ENCODE measurements at regions of chr5 and their contacts with region 1.

Region 1: GRCh38 chr5:133423618-133424282 is 188.6 kb downstream of the FSTL4 start:
- DNase-seq: peak; percentile 78
- ATAC-seq: peak; percentile 94

Region 2: GRCh38 chr5:133508845-133509741 is 85.3 kb after region 1 on chr5:
- intact Hi-C with region 1: no loop called
- DNase-seq: no peak
- ATAC-seq: no peak

Region 3: DNA sequence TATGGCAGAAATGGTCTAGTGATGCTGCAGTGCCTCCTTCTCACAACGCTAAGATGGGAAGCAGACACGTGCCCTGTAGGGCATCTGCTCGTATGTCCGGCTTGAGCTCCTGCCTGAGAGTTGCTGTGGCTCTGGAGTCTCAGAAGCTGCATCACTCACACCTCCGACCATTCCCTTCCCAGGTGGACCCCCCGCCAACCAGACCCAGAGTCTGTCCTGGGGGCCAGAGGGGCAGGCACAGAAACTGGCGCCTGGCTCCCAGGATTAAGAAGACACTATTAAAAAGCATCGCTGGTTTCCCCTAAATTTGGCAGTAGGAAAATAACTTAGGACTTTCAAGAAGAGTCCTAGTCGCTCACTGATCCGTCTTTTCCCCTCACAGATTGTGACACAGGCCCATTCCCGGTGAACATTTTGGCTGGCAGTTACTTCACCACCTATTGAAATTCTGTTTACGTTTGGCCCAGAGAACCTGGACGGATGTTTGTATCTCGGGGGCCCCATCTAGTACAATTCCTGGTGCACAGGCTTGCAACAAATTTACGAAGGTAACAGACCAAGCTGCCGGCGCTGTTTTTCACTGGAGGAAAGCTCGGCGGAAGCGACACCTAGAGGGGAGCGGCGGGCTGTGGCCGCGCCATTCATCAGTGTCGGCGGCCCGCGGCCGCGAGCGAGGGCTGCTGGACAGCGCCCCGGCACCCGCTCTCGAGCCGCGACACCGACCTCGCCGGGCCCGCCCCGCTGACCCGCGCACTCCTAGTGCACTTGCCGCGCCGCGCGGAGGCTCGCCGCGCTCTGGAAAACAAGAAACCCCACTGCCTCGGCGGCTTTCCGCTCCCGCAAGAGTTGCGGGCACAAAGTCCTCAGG is 187.0 kb after region 1 on chr5:
- intact Hi-C with region 1: loop called (anchors 10 kb)
- DNase-seq: peak; percentile 72
- ATAC-seq: peak; percentile 97

Region 4: DNA sequence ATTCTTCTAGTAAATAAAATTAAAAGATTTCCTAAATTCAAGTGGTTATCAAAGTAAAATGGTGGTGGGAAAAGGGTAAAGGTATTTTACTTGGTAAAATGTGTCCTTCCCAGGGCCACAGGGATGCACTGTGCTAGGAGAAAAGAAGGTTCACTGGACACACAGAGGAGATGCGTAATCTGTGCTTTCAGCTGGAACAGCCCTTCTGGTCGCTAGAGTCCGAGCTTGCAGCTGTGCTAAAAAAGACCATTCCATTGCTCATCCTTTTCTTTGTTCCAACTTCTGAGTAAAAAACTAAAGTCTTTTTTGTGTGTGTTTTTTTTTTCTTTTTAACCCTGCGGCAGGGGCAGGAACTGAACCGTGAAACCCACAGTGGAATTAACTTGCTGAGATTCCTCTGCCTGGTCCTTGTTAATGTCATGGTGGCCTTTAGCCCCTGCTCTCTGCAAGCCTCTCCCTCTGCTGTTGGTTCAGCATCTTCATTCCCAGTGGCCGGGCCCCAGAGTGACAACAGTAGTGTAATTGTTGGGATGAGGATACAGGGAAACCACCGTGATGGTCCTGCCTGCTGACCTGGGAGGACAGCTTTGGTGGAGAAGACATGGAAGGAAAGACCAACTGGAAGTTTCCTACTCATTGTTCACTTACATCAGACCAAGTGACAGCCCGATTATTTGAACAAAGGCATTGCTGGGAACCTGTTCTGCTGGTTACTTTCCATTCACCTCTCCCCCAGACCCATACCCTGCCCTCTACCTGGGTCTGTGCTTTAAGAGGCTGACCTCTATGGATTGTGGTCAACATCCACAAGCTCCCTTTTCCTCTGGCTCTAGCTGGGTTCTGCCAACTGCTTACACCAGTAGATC is 220.5 kb after region 1 on chr5:
- intact Hi-C with region 1: no loop called
- DNase-seq: no peak
- ATAC-seq: no peak

Region 5: DNA sequence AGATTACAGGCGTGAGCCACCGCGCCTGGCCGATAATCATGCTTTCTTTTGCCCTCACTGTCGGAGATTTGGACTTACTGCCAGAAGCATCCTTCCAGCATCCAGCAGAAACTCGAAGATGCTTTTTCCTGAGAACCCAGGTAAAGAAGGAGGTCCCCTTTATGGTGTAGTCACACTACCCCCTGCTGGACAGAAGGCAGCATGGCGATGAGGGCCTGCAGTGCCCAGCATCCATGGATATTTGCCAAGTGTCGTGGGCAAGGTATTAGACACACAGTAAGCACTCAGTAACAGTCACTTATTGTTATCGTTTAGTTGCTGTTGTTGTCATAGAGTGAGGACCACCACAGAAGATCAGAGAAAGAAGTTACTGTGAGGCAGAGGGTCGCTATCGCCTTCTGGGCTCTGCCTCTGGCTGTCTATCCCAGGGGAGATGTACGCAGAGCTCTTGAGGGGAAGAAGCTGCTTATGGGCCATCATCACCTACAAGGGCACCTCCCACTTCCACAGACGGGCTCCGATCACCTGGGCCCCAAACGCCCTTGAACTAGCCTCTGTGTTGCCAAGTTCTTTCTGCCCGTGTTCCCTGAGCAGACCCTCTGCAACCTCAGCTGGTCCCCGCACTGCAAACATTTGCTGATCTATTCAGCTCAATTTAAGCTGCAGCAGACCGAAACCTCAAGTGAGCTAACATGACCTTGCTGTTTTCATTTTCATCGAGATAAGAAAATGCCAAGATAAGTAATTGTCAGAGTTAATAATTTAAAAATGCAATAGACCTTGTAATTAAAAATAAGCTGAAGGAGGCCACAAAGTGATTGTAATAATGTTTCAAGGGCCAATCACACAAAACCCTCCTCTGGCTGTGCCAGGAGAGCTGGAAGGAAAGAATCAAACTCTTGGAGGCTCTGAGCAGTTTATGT is 520.8 kb after region 1 on chr5:
- intact Hi-C with region 1: loop called (anchors 10 kb)
- DNase-seq: no peak
- ATAC-seq: peak; percentile 70